ENCODE measurements at regions of chr9 and their contacts with region 1.

Region 1: GRCh38 chr9:14768405-14769229 is 46.1 kb upstream of the CER1 start:
- DNase-seq: peak; percentile 10 to 43 (median 16)
- ATAC-seq: peak; percentile 39; the same call in 2 of the 3 replicates
- H3K4me3 ChIP-seq: no peak overlapping the region
- H3K27ac ChIP-seq: no peak overlapping the region
- H3K4me1 ChIP-seq: no peaks in the 10 kb centered on the region
- H3K27me3 ChIP-seq: no peaks in the 10 kb centered on the region; a peak in 1 of 5 replicates
- CTCF ChIP-seq: peak; percentile 35 to 64 (median 51); a peak in 5 of 6 replicates
- EP300 ChIP-seq: no peak
- POLR2A ChIP-seq: no peak
- RAD21 ChIP-seq: peak; percentile 61 to 69

Region 2: GRCh38 chr9:13033959-13034693 is 1734.5 kb before region 1 on chr9:
- CTCF ChIA-PET with region 1: no interaction called
- POLR2A ChIA-PET with region 1: no interaction called
- in situ Hi-C with region 1: no loop called
- intact Hi-C with region 1: loop called (anchors 10 kb)
- DNase-seq: peak; percentile 43 to 66 (median 54)
- ATAC-seq: peak; percentile 91
- H3K4me3 ChIP-seq: no peak overlapping the region
- H3K27ac ChIP-seq: no peak overlapping the region
- H3K4me1 ChIP-seq: no peaks in the 10 kb centered on the region
- H3K27me3 ChIP-seq: no peaks in the 10 kb centered on the region
- CTCF ChIP-seq: peak; percentile 60 to 75 (median 70)
- EP300 ChIP-seq: no peak
- POLR2A ChIP-seq: no peak
- RAD21 ChIP-seq: peak; percentile 64 to 75

Region 3: DNA sequence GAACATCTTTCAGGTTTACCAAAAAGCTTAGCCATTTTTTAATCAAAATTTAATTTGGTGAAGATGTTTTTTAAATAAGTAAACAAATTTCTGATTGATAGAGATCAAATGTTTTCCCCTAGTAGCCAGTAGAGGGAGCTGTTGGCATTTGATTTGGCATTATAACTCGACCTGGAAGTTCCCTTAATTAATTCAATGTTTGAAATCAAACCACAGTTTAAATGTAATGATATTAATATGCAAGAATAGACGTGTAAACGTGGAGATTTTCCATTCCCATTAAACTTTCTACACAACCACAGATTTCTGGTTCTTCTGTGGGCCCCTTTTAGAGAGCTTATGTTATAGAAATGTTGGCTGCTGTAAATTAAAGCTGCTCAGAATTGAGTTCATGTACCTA is 1341.0 kb before region 1 on chr9:
- CTCF ChIA-PET with region 1: no interaction called
- POLR2A ChIA-PET with region 1: no interaction called
- in situ Hi-C with region 1: no loop called
- intact Hi-C with region 1: loop called (anchors 10 kb)
- DNase-seq: peak; percentile 11 to 37 (median 22)
- ATAC-seq: no peak
- H3K4me3 ChIP-seq: no peak overlapping the region
- H3K27ac ChIP-seq: no peak overlapping the region
- H3K4me1 ChIP-seq: no peaks in the 10 kb centered on the region
- H3K27me3 ChIP-seq: no peaks in the 10 kb centered on the region
- CTCF ChIP-seq: peak in 2 of 3 experiments; percentile 44 to 63; a peak in 4 of 6 replicates
- EP300 ChIP-seq: no peak
- POLR2A ChIP-seq: no peak
- RAD21 ChIP-seq: peak; percentile 63 to 71

Region 4: DNA sequence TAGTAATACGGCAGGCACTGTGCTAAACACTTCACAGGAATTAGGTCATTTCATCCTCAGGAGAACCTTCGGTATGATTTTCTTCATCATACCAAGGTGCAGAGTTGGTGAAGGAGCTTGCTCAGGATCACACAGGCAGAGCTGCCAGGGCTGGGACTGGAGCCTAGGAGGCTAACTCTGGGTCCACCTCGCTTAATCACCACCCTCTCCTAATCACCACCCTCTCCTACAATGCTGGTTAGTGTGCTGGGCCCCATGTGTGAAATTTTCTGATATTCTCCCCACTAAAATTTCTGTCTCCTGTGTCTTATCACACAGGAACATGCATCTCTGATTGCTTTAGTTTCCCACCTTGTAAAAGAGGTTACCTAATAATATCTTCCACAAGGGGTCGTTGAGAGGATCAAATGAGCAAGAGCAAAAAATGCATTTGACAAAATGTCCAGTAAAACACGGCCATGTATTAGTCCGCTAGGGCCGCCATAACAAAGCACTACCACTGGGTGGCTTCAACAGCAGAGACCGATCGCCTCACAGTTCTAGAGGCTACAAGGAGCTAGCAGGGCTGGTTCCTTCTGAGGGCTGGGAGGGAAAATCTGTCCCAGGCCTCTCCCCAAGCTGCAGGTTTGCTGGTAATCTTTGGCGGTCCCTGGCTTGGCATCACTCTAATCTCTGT is 326.5 kb before region 1 on chr9:
- CTCF ChIA-PET with region 1: interaction called, 3 read pairs
- POLR2A ChIA-PET with region 1: no interaction called
- in situ Hi-C with region 1: loop called (anchors 10 kb)
- intact Hi-C with region 1: no loop called
- DNase-seq: peak; percentile 31 to 78 (median 46)
- ATAC-seq: peak; percentile 100
- H3K4me3 ChIP-seq: no peak overlapping the region
- H3K27ac ChIP-seq: no peak overlapping the region
- H3K4me1 ChIP-seq: peaks cover 0 to 7% of the 10 kb centered on the region in 2 experiments; a peak in 3 of 5 replicates
- H3K27me3 ChIP-seq: no peaks in the 10 kb centered on the region
- CTCF ChIP-seq: peak; percentile 71 to 92 (median 72)
- EP300 ChIP-seq: no peak
- POLR2A ChIP-seq: no peak
- RAD21 ChIP-seq: peak; percentile 32 to 61

Region 5: GRCh38 chr9:14466429-14466818 is 302.2 kb before region 1 on chr9:
- CTCF ChIA-PET with region 1: no interaction called
- POLR2A ChIA-PET with region 1: no interaction called
- in situ Hi-C with region 1: no loop called
- intact Hi-C with region 1: loop called (anchors 5 kb)
- DNase-seq: no peak
- ATAC-seq: no peak
- H3K4me3 ChIP-seq: no peak overlapping the region
- H3K27ac ChIP-seq: no peak overlapping the region
- H3K4me1 ChIP-seq: no peaks in the 10 kb centered on the region; a peak in 1 of 5 replicates
- H3K27me3 ChIP-seq: no peaks in the 10 kb centered on the region
- CTCF ChIP-seq: no peak
- EP300 ChIP-seq: no peak
- POLR2A ChIP-seq: no peak
- RAD21 ChIP-seq: no peak

Region 6: DNA sequence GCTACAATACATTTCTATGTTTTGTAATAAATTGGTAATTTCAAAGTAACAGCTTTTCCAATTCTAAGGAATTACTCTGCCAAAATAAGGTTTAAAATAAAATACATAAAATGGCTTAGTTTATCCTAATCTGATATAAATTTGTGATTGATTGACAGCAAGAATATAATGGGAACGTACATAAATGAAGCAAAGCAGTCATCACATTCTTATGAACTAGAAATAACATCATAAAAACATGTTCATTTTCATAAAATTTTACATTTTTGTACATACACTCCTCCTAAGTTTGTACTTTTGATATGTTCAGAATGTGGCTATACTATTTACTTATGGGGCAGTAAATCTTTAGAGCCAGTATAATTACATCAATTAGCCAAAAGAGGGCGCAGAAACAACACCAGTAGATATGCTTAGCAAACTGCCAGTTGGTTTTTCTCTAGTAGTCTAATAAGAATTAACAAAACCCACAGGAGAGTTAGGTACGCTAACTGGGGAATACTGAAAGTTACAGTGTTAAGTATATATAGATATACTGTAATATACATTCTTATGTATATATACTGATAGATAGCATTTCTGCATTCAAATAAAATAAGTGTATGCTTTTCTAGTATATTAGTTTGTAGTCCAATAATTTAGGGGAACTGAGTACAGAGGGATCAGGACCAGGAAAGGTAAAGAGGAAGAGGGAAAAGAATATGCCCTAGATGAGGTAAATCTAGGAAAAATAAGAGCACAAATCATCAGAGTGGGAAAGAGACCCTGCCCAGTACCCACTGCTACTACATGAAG is 152.2 kb before region 1 on chr9:
- CTCF ChIA-PET with region 1: interaction called, 5 read pairs
- POLR2A ChIA-PET with region 1: no interaction called
- in situ Hi-C with region 1: no loop called
- intact Hi-C with region 1: loop called (anchors 1 kb)
- DNase-seq: peak in 2 of 4 experiments; percentile 16 to 52
- ATAC-seq: peak; percentile 77
- H3K4me3 ChIP-seq: no peak overlapping the region
- H3K27ac ChIP-seq: no peak overlapping the region
- H3K4me1 ChIP-seq: no peaks in the 10 kb centered on the region
- H3K27me3 ChIP-seq: no peaks in the 10 kb centered on the region
- CTCF ChIP-seq: peak; percentile 32 to 62 (median 50); a peak in 5 of 6 replicates
- EP300 ChIP-seq: no peak
- POLR2A ChIP-seq: no peak
- RAD21 ChIP-seq: peak; percentile 42 to 62; a peak in 3 of 4 replicates

Region 7: GRCh38 chr9:14730461-14730898 is 38.1 kb before region 1 on chr9:
- CTCF ChIA-PET with region 1: no interaction called
- POLR2A ChIA-PET with region 1: no interaction called
- in situ Hi-C with region 1: no loop called
- intact Hi-C with region 1: no loop called
- DNase-seq: no peak
- ATAC-seq: no peak
- H3K4me3 ChIP-seq: no peak overlapping the region
- H3K27ac ChIP-seq: no peak overlapping the region
- H3K4me1 ChIP-seq: no peaks in the 10 kb centered on the region
- H3K27me3 ChIP-seq: no peaks in the 10 kb centered on the region
- CTCF ChIP-seq: no peak
- EP300 ChIP-seq: no peak
- POLR2A ChIP-seq: no peak
- RAD21 ChIP-seq: no peak

Region 8: DNA sequence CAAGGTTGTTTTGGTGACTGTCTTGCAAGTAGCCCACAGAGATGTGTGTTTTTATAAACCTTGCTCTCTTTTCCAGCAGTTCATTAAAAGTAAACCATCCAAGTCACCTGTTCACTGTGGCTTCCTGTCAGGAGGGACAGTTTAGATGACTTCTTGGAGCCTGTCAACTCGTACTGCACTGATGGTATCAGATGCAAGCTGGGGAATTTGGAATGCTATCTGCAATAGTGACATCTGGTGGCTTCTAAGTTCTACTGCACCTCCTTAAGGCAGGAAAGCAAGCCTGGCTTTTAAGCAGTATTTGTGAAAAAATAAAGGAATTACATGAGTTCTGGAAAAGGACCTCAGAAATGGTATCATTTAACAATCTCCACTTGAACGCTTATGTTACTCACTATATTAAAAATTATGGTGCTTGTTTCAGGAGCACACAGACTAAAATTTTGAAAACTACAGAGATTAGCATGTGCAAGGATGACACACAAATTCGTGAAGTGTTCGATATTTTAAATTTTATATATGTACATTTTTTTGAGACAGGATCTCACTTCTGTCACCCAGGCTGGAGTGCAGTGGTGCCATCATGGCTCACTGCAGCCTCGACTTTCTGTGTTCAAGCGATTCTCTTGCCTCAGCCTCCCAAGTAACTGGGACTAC is 374.4 kb after region 1 on chr9:
- CTCF ChIA-PET with region 1: no interaction called
- POLR2A ChIA-PET with region 1: no interaction called
- in situ Hi-C with region 1: no loop called
- intact Hi-C with region 1: loop called (anchors 5 kb)
- DNase-seq: peak; percentile 42 to 54 (median 48)
- ATAC-seq: peak; percentile 84
- H3K4me3 ChIP-seq: no peak overlapping the region
- H3K27ac ChIP-seq: no peak overlapping the region
- H3K4me1 ChIP-seq: no peaks in the 10 kb centered on the region
- H3K27me3 ChIP-seq: no peaks in the 10 kb centered on the region
- CTCF ChIP-seq: peak; percentile 57 to 72 (median 65)
- EP300 ChIP-seq: no peak
- POLR2A ChIP-seq: no peak
- RAD21 ChIP-seq: peak; percentile 54 to 72

Measured in K562 (cell line).